ENCODE measurements at regions of chr10 and their contacts with region 1.

Region 1: GRCh38 chr10:75019370-75019769 is 92.1 kb upstream of the SAMD8 start:
- DNase-seq: no peak
- ATAC-seq: peak; percentile 34
- H3K4me3 Mint-ChIP-seq: no peak overlapping the region
- H3K27ac Mint-ChIP-seq: no peak overlapping the region
- H3K4me1 Mint-ChIP-seq: peaks cover 31% of the 10 kb centered on the region
- H3K27me3 Mint-ChIP-seq: no peaks in the 10 kb centered on the region

Region 2: GRCh38 chr10:74244097-74244685 is 775.2 kb before region 1 on chr10:
- CTCF ChIA-PET with region 1: interaction called, 6 read pairs
- POLR2A ChIA-PET with region 1: no interaction called
- intact Hi-C with region 1: loop called in 1 of 2 experiments (anchors 2 kb)
- DNase-seq: peak; percentile 35
- ATAC-seq: no peak
- H3K4me3 Mint-ChIP-seq: no peak overlapping the region
- H3K27ac Mint-ChIP-seq: no peak overlapping the region
- H3K4me1 Mint-ChIP-seq: no peaks in the 10 kb centered on the region
- H3K27me3 Mint-ChIP-seq: no peaks in the 10 kb centered on the region

Region 3: DNA sequence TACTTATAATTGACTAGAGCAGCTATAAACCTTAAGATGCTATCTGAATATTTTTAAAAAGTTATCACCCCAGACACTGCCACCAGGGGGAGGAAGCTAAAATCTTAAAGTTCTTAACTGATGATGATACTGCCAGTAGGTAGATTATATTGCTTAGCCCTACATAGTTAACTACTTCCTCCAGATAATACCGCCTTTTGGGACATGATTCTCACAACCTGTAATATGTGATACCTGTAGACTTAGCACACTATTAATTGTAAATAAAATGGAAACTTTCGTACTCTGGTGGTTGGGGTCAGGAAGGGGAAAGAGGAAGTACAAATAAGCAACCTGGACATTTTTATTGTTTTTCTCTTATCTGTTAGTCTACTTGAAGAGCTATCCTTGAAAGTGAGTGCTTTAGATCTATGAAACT is 599.4 kb before region 1 on chr10:
- CTCF ChIA-PET with region 1: interaction called, 17 read pairs
- POLR2A ChIA-PET with region 1: no interaction called
- intact Hi-C with region 1: loop called (anchors 5 to 10 kb)
- DNase-seq: peak; percentile 48
- ATAC-seq: peak; percentile 53
- H3K4me3 Mint-ChIP-seq: no peak overlapping the region
- H3K27ac Mint-ChIP-seq: no peak overlapping the region
- H3K4me1 Mint-ChIP-seq: peaks cover 4% of the 10 kb centered on the region
- H3K27me3 Mint-ChIP-seq: no peaks in the 10 kb centered on the region

Region 4: GRCh38 chr10:74612195-74612594 is 407.2 kb before region 1 on chr10:
- CTCF ChIA-PET with region 1: no interaction called
- POLR2A ChIA-PET with region 1: no interaction called
- intact Hi-C with region 1: no loop called
- DNase-seq: no peak
- ATAC-seq: no peak
- H3K4me3 Mint-ChIP-seq: no peak overlapping the region
- H3K27ac Mint-ChIP-seq: no peak overlapping the region
- H3K4me1 Mint-ChIP-seq: no peaks in the 10 kb centered on the region
- H3K27me3 Mint-ChIP-seq: no peaks in the 10 kb centered on the region

Region 5: DNA sequence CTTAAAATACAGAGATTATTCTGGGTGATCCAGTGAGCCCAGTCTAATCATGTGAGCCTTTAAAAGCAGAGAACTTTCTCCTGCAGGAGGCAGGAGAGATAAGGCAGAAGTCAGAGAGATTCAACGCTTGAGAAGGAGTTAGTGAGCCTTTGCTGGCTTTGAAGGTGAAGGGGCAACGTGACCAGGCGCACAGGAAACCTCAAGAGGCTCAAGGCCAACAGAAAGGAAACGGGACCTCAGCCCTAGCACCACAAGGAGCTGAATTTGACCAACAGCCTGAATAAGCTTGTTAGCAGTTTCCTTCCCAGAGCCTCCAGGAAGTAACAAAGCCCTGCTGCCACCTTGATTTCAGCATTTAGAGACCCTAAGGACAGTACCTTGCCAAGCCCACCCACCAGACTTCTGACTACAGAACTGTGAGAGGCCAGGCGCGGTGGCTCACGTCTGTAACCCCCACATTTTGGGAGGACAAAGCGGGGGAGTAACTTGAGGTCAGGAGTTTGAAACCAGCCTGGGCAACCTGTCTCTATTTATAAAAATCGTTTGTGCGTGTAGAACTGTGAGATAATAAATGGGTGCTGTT is 280.3 kb before region 1 on chr10:
- CTCF ChIA-PET with region 1: interaction called, 5 read pairs
- POLR2A ChIA-PET with region 1: no interaction called
- intact Hi-C with region 1: loop called (anchors 1 to 10 kb)
- DNase-seq: peak; percentile 32
- ATAC-seq: peak; percentile 65
- H3K4me3 Mint-ChIP-seq: no peak overlapping the region
- H3K27ac Mint-ChIP-seq: peak overlapping the region; percentile 76
- H3K4me1 Mint-ChIP-seq: peaks cover 15% of the 10 kb centered on the region
- H3K27me3 Mint-ChIP-seq: no peaks in the 10 kb centered on the region

Region 6: GRCh38 chr10:74947781-74948401 is 71.5 kb before region 1 on chr10:
- CTCF ChIA-PET with region 1: no interaction called
- POLR2A ChIA-PET with region 1: no interaction called
- intact Hi-C with region 1: no loop called
- DNase-seq: no peak
- ATAC-seq: no peak
- H3K4me3 Mint-ChIP-seq: no peak overlapping the region
- H3K27ac Mint-ChIP-seq: no peak overlapping the region
- H3K4me1 Mint-ChIP-seq: peaks cover 32% of the 10 kb centered on the region
- H3K27me3 Mint-ChIP-seq: no peaks in the 10 kb centered on the region

Region 7: GRCh38 chr10:75074711-75075445 is 55.5 kb after region 1 on chr10:
- CTCF ChIA-PET with region 1: no interaction called
- POLR2A ChIA-PET with region 1: no interaction called
- intact Hi-C with region 1: no loop called
- DNase-seq: no peak
- ATAC-seq: no peak
- H3K4me3 Mint-ChIP-seq: no peak overlapping the region
- H3K27ac Mint-ChIP-seq: no peak overlapping the region
- H3K4me1 Mint-ChIP-seq: peaks cover 7% of the 10 kb centered on the region
- H3K27me3 Mint-ChIP-seq: no peaks in the 10 kb centered on the region

Region 8: DNA sequence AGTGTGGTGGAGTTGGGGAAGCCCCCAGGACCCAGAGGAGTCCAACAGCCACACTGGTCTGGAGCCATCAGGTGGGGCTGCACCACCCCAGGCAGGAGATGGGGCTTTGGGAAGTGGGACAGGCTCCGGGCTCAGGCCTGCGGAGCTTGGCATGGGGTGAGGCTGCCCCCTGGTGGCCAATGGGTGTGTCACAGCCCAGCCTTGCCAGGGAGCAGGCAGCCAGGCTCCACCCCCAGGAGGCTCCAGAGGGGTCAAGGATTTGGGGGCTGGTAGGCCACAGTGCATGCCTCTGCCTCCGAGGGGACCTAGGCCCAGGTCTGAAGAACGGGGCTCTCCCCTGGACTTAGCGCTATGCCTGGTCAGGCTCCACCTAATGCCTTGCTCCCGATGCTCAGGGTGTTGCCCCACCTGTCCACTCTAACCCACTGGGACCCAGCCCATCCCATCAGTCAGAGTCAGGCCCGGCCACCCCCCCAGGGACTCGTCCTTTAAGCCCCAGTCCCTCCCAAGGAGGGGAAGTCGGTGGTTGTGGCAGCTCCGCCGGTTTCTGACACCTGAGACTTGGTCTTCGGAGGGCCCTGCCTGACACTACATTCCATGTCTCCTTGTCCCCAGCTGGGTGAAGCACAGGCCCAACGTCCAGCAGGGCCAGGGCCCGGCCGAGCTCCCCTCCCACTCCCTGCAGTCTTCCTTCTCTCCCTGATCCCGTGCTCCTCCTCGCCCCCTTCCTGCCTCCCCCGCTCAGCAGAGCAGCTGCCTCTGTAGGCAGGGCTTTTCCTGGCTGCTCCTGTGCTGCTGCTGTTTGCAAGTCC is 80.8 kb after region 1 on chr10:
- CTCF ChIA-PET with region 1: interaction called, 4 read pairs
- POLR2A ChIA-PET with region 1: no interaction called
- intact Hi-C with region 1: loop called (anchors 2 to 5 kb)
- DNase-seq: peak; percentile 90
- ATAC-seq: peak; percentile 97
- H3K4me3 Mint-ChIP-seq: no peak overlapping the region
- H3K27ac Mint-ChIP-seq: no peak overlapping the region
- H3K4me1 Mint-ChIP-seq: no peaks in the 10 kb centered on the region
- H3K27me3 Mint-ChIP-seq: no peaks in the 10 kb centered on the region